ENCODE measurements at regions of chr4 and their contacts with region 1.

Region 1: DNA sequence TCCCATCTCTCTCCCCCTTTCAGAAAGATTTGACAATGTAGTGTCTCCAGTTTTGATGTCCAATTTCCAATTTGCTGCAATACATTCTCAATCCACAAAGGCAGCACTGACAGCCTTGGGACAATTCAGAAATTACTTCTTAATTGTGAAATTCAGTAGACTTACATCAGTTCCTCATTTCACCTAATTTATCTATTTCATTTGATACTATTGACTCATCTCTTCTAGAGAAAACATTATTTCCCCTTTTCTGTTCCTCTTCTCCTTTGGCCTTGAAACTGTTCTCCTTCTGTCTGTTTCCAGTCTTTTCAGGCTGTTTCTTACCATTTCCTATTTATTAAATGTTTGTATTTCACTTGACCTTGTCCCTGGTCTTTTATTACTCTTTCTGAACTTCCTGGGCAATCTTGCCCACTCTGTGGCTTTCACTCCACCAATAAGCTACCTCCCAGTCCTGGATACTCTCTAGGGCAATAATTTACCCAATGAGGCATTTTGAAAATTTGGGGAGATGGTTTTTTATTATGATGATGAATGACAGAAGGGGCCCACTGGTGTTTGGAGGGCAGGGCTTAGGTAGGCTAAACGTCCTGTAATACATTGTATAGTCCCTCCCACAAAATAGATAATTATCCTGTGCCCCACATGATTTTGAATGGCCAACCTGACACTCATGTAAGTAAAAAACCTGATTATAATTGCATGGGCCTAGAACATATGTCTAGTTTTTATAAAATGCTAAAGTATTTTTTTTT is 498.0 kb upstream of the BOD1L1 start:
- DNase-seq: peak; percentile 77 to 95 (median 86)
- H3K4me3 ChIP-seq: peak overlapping the region in 1 of 3 experiments; percentile 19
- H3K4me3 Mint-ChIP-seq: peak overlapping the region in 1 of 2 donors; percentile 24
- H3K27ac ChIP-seq: peak overlapping the region; percentile 72 to 76
- H3K27ac Mint-ChIP-seq: peak overlapping the region; percentile 91 to 98 (median 96)
- H3K4me1 ChIP-seq: peaks cover 35 to 38% of the 10 kb centered on the region in 2 donors
- H3K4me1 Mint-ChIP-seq: peaks cover 54% of the 10 kb centered on the region
- H3K27me3 ChIP-seq: no peaks in the 10 kb centered on the region
- H3K27me3 Mint-ChIP-seq: peaks cover 0 to 2% (median 0%) of the 10 kb centered on the region in 3 donors
- CTCF ChIP-seq: peak; percentile 63

Region 2: GRCh38 chr4:14168919-14169318 is 43.4 kb after region 1 on chr4:
- intact Hi-C with region 1: loop called (anchors 5 to 10 kb)
- DNase-seq: peak; percentile 73 to 84 (median 79)
- H3K4me3 ChIP-seq: peak overlapping the region in 1 of 3 experiments; percentile 17
- H3K4me3 Mint-ChIP-seq: peak overlapping the region in 1 of 2 donors; percentile 61
- H3K27ac ChIP-seq: peak overlapping the region in 1 of 2 donors; percentile 33
- H3K27ac Mint-ChIP-seq: peak overlapping the region in 3 of 7 donors; percentile 2 to 66 (median 60)
- H3K4me1 ChIP-seq: peaks cover 45 to 49% of the 10 kb centered on the region in 2 donors
- H3K4me1 Mint-ChIP-seq: peaks cover 45% of the 10 kb centered on the region
- H3K27me3 ChIP-seq: no peaks in the 10 kb centered on the region
- H3K27me3 Mint-ChIP-seq: peaks cover 0 to 3% (median 1%) of the 10 kb centered on the region in 3 donors
- CTCF ChIP-seq: no peak

Region 3: DNA sequence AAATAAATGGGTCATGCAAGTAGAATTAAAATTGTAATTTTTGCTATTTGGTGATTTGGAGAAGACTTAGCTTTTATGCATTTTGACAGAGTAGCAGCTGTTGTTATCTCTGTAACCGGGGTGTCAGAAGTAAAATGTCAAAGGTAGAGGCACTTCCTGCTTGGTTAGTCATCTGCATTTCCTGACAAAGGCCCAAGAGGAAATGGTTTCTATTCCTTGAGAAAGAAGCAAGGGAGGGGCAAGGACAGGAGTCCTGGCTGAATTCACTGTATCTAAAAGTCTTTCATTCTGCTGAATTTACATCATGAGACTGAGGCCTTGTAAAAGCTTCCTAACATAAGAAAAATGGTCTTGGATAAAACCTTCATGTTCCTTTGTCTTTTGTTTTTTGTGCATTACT is 52.9 kb after region 1 on chr4:
- intact Hi-C with region 1: loop called in 1 of 2 experiments (anchors 10 kb)
- DNase-seq: peak; percentile 33 to 67 (median 64)
- H3K4me3 ChIP-seq: peak overlapping the region in 1 of 3 experiments; percentile 30
- H3K4me3 Mint-ChIP-seq: peak overlapping the region in 1 of 2 donors; percentile 16
- H3K27ac ChIP-seq: peak overlapping the region in 1 of 2 donors; percentile 43
- H3K27ac Mint-ChIP-seq: peak overlapping the region in 5 of 7 donors; percentile 11 to 48 (median 25)
- H3K4me1 ChIP-seq: peaks cover 19 to 20% of the 10 kb centered on the region in 2 donors
- H3K4me1 Mint-ChIP-seq: peaks cover 20% of the 10 kb centered on the region
- H3K27me3 ChIP-seq: no peaks in the 10 kb centered on the region
- H3K27me3 Mint-ChIP-seq: peaks cover 0 to 2% (median 0%) of the 10 kb centered on the region in 3 donors
- CTCF ChIP-seq: no peak

Region 4: DNA sequence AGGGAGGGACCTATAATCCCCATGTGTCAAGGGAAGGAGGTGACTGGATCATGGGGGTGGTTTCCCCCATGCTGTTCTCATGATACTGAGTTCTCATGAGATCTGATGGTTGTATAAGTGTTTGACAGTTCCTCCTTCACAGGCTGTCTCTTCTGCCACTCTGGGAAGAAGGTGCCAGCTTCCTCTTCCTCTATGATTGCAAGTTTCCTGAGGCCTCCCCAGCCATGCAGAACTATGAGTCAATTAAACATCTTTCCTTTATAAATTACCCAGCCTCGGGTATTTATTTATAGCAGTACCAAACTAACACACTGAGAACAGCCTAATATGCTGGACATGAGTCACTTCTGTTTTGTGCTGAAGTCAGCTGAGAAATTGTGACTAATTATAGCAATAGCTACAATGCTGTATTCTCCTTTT is 219.8 kb after region 1 on chr4:
- intact Hi-C with region 1: loop called in 1 of 2 experiments (anchors 10 kb)
- DNase-seq: peak; percentile 82 to 89 (median 84)
- H3K4me3 ChIP-seq: peak overlapping the region in 1 of 3 experiments; percentile 41
- H3K4me3 Mint-ChIP-seq: peak overlapping the region in 1 of 2 donors; percentile 71
- H3K27ac ChIP-seq: peak overlapping the region in 1 of 2 donors; percentile 82
- H3K27ac Mint-ChIP-seq: peak overlapping the region; percentile 84 to 95 (median 93)
- H3K4me1 ChIP-seq: peaks cover 14 to 31% of the 10 kb centered on the region in 2 donors
- H3K4me1 Mint-ChIP-seq: peaks cover 21% of the 10 kb centered on the region
- H3K27me3 ChIP-seq: no peaks in the 10 kb centered on the region
- H3K27me3 Mint-ChIP-seq: peaks cover 0 to 2% (median 0%) of the 10 kb centered on the region in 3 donors
- CTCF ChIP-seq: no peak